KBM-7 (cell line): ENCODE measurements at regions of chr14 and their contacts with region 1.

Region 1: GRCh38 chr14:61456720-61457119 is 135.3 kb downstream of the PRKCH start:
- DNase-seq: peak; percentile 77

Region 2: DNA sequence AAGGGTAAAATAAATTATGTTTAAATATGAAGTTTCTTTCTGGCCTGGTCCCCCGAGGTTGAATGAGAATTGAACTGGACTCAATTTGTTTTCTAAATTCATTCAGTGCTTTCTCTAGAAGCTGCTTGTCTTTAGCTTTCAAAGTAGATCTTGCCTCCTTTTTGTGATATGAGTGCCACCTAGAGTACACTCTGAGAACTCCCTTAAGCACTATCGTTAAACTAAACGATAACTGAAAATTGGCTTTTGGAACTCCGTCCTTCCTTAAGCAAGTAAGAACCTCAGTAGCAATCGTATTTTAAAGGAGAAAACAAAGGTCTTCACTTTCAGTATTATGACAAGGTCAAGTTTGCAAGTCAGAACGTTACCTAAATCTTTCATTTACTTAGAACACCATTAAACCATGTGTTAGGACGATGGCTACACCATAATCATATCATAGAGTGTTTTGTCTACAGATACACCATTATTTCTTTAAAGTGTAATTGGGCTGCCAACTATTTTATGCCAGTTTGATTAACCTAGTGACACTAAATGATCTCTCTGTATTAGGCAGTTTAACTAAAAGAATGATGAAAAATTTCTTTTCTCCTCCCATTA is 670.3 kb after region 1 on chr14:
- in situ Hi-C with region 1: loop called (anchors 25 kb)
- DNase-seq: peak; percentile 69